Posterior vena cava (tissue), 2 donors: ENCODE measurements at regions of chr4 and their contacts with region 1.

Region 1: DNA sequence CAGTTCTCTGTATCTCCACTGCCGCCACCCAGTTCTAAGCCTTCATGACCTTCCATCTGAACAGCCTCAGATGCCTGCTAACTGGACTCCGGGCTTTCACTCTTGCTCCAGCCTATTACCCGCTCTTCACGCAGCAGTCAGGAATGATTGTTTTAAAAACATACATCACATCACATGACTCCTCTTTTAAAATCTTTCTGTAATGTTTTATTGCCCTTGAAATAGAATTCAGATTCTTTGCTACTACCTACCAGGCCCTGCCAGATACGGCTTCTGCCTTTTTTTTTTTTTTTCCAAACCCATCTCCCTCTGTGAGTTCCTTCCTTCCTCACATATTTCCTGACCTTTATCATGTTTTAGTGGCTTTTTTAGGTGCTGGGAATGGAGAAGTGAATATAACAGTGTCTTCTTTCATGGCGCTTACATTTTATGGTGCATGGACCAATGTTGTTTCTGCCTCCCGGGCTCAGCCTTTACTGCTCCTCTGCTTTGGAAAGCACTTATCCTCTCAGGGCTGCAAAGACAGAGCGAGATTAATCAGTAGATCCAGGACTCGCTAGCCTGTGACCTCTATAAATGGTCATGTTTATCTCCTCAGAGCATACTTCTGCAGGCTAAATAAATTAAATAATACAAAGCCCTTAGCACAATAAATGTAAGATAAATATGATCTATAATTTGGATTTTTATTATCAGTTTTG is 58.0 kb downstream of the FBXO8 start:
- DNase-seq: no peak

Region 2: GRCh38 chr4:174005422-174005821 is 220.1 kb before region 1 on chr4:
- intact Hi-C with region 1: no loop called
- DNase-seq: no peak

Region 3: GRCh38 chr4:174236359-174236758 is 10.9 kb after region 1 on chr4:
- intact Hi-C with region 1: loop called in 1 of 2 experiments (anchors 1 kb)
- DNase-seq: no peak

Region 4: GRCh38 chr4:174303687-174304086 is 78.2 kb after region 1 on chr4:
- intact Hi-C with region 1: loop called in 1 of 2 experiments (anchors 2 kb)
- DNase-seq: no peak